ENCODE measurements at regions of chr4 and their contacts with region 1.

Region 1: DNA sequence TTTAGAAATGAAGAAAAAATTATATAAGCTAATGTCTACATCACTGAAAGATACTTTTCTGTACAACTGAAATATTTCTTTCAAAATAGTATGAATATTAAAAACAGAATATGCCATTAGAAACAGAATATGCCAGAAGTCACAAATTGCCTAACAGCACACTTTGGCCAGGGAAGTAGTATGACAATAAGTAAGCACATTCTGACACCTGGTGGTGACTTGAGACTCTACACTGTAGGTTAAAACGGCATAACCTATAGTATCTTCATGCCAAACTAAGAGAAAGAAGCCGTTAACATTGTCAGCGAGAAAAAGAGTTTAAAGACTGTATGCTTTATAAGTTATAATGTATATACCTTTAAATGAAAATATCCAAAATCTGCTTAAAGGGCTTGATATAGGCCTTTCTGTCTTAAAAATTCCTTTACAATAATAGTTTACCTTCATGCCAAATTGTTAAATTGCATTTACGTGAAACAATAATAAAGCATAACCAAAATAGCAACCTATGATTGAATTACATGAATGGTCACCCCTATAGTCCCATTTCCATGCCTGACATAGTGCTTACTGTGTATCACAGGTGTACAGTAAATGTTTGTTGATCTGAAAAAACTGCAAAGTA is 32.8 kb downstream of the FAM13A start:
- DNase-seq: peak in 29 of 42 donors; percentile 13 to 86 (median 61)

Region 2: DNA sequence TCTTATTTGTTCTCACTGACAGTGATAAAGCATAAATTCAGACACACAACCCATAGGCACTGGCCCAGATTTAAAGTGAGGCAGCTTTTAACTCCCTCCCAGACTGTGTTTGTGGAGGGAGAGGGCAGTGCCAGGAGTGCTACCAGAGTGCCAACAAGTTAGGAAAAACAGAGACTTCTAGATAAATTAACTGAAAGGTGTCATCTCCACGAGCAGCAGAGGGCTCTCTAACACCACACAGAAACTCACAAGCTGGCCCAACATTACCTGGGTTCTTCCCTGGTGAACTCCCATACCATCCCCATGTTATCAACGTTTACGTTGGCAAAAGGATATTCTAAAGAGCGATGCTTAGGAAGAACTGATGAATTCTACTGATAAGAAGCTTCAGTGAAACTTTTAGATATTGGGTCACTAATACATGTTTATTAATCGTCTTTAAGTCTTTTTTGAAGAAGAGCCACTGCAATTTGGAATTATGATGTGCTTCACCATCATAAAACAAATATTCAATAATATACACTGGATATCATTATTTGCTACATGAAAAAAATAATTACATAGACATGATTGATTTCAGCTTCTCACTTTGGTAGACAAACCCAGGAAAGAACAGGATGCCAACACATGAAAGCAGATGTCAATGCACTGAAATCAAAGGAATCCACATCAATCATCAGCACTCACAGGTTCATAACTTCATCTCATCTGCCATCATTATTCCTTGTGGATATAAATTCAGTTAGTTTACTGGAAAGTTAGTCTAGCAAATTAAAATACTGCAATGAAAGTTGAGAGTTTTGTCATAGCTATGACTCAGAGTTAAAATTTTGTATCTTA is 205.3 kb before region 1 on chr4:
- intact Hi-C with region 1: loop called (anchors 5 kb)
- DNase-seq: peak in 40 of 42 donors; percentile 5 to 79 (median 52)

Measured in head of caudate nucleus (tissue), 42 donors.